Panc1 (cell line): ENCODE measurements at regions of chr11 and their contacts with region 1.

Region 1: DNA sequence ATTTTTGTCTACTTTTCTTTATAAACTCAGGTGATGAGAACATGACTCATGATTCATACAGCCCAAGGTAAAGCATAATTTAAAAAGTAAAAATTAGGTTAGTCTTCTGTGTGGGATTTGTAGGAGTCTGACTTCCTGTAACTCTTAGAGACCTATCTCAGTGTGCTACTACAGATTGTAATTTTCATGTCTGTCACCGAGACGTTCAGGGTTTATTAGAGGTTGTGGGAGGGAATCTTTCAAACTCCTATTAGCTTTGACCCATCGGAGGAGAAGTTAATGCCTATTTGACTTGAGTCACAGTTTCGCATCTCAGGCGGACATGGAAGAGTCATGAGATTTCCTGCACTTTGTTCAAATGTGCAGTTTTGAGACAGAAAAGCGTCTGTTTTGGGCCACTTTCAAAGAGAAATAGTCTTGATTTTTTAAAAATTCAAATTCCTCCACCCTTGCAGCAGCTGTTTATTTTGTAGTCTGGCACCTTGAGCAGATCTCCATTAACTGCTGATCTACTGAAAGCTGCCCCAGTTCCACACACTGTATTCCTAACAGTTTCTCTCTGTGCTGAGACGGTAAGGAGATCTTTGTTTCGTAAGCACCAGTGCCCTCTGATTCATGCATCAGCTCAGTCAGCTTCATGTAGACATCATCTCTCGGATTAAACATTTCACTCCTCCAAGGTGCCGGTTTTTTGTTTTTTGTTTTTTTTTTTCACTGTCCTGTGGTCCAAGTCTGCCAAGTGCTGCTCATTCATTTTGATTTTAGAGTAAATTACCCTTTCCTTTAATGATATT is 24.3 kb downstream of the ALKBH3 start:
- DNase-seq: no peak
- ATAC-seq: no peak
- H3K4me3 ChIP-seq: no peak overlapping the region
- H3K27ac ChIP-seq: no peak overlapping the region
- H3K4me1 ChIP-seq: no peaks in the 10 kb centered on the region
- H3K27me3 ChIP-seq: no peaks in the 10 kb centered on the region
- CTCF ChIP-seq: no peak

Region 2: DNA sequence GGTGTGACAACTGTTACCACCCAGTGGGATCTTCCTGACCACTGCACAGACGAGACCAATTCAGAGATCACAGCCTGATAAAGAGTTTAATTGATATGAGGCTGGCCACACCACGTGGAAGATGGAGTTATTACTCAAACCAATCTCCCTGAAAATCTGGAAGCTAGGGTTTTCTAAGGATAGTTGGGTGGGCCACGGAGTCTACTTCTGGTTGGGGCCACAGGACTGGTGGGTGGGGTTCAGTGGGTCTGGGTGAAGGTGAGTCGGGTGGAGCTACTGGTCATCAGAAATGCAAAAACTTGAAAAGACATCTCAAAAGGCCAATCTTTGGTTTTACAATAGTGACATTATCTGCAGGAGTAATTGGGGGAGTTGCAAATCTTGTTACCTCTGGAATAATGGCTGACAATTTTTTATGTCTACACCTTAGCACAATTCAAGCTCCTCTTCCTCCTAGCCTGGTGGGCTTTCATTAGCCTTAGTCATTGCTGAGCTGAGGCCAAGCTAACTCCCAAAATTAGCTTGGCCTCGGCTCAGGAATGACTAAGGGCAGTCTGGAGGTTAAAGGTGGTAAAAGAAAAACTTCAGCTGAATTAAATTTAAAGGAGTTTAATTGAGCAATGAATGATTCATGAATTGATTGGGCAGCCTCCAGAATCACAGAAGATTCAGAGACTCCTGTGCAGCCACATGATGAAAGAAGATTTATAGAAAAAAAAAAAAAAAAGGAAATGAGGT is 50.6 kb after region 1 on chr11:
- CTCF ChIA-PET with region 1: no interaction called
- POLR2A ChIA-PET with region 1: no interaction called
- in situ Hi-C with region 1: no loop called
- intact Hi-C with region 1: no loop called
- DNase-seq: no peak
- ATAC-seq: no peak
- H3K4me3 ChIP-seq: no peak overlapping the region
- H3K27ac ChIP-seq: no peak overlapping the region
- H3K4me1 ChIP-seq: no peaks in the 10 kb centered on the region
- H3K27me3 ChIP-seq: peaks cover 11% of the 10 kb centered on the region
- CTCF ChIP-seq: no peak

Region 3: DNA sequence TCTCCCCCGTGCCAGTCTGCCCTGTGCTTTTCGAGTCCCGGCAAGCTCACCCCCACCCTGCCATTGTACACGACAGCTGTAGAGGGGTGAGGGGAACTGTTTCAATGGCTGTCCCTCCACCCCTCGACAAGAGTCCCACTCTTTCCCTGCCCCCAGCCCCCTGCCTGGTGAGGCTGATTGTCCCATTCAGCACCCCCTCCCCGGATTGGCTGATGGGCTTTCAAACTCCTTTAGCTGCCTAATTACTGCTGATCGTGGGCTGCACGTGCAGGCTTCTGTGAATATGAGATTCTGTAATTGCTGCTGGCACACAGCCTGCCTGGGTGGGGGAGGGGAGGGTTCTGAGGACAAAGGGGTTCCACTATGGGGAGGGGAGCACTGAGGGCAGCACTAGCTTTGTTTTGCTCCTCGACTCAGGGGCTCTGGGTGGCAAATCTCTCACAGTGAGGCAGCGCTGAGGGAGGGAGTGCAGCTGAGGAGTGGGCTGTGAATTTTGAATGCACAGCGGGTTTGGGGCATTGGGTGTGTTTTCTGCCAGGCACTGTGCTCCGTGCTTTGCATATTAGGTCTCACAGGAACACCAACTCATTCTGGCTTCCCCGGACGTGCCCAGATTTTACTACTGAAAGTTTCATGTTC is 100.2 kb after region 1 on chr11:
- CTCF ChIA-PET with region 1: interaction called, 15 read pairs
- POLR2A ChIA-PET with region 1: no interaction called
- in situ Hi-C with region 1: no loop called
- intact Hi-C with region 1: no loop called
- DNase-seq: no peak
- ATAC-seq: no peak
- H3K4me3 ChIP-seq: no peak overlapping the region
- H3K27ac ChIP-seq: no peak overlapping the region
- H3K4me1 ChIP-seq: no peaks in the 10 kb centered on the region
- H3K27me3 ChIP-seq: no peaks in the 10 kb centered on the region
- CTCF ChIP-seq: no peak

Region 4: GRCh38 chr11:44083906-44084305 is 179.0 kb after region 1 on chr11:
- CTCF ChIA-PET with region 1: no interaction called
- POLR2A ChIA-PET with region 1: no interaction called
- in situ Hi-C with region 1: no loop called
- intact Hi-C with region 1: no loop called
- DNase-seq: no peak
- ATAC-seq: no peak
- H3K4me3 ChIP-seq: no peak overlapping the region
- H3K27ac ChIP-seq: no peak overlapping the region
- H3K4me1 ChIP-seq: no peaks in the 10 kb centered on the region
- H3K27me3 ChIP-seq: no peaks in the 10 kb centered on the region
- CTCF ChIP-seq: no peak